PC-9 (cell line): ENCODE measurements at regions of chr7 and their contacts with region 1.

Region 1: GRCh38 chr7:73638911-73639310 is 14.6 kb upstream of the MLXIPL start:
- DNase-seq: no peak
- H3K4me3 ChIP-seq: no peak overlapping the region
- H3K27ac ChIP-seq: no peak overlapping the region
- H3K4me1 ChIP-seq: peaks cover 12% of the 10 kb centered on the region
- H3K27me3 ChIP-seq: no peaks in the 10 kb centered on the region
- CTCF ChIP-seq: no peak

Region 2: GRCh38 chr7:73329861-73330581 is 308.9 kb before region 1 on chr7:
- CTCF ChIA-PET with region 1: no interaction called
- POLR2A ChIA-PET with region 1: no interaction called
- intact Hi-C with region 1: no loop called
- DNase-seq: no peak
- H3K4me3 ChIP-seq: no peak overlapping the region
- H3K27ac ChIP-seq: no peak overlapping the region
- H3K4me1 ChIP-seq: no peaks in the 10 kb centered on the region
- H3K27me3 ChIP-seq: no peaks in the 10 kb centered on the region
- CTCF ChIP-seq: no peak

Region 3: GRCh38 chr7:73451780-73452398 is 187.0 kb before region 1 on chr7:
- CTCF ChIA-PET with region 1: no interaction called
- POLR2A ChIA-PET with region 1: no interaction called
- intact Hi-C with region 1: no loop called
- DNase-seq: no peak
- H3K4me3 ChIP-seq: no peak overlapping the region
- H3K27ac ChIP-seq: no peak overlapping the region
- H3K4me1 ChIP-seq: no peaks in the 10 kb centered on the region
- H3K27me3 ChIP-seq: no peaks in the 10 kb centered on the region
- CTCF ChIP-seq: peak; percentile 98

Region 4: DNA sequence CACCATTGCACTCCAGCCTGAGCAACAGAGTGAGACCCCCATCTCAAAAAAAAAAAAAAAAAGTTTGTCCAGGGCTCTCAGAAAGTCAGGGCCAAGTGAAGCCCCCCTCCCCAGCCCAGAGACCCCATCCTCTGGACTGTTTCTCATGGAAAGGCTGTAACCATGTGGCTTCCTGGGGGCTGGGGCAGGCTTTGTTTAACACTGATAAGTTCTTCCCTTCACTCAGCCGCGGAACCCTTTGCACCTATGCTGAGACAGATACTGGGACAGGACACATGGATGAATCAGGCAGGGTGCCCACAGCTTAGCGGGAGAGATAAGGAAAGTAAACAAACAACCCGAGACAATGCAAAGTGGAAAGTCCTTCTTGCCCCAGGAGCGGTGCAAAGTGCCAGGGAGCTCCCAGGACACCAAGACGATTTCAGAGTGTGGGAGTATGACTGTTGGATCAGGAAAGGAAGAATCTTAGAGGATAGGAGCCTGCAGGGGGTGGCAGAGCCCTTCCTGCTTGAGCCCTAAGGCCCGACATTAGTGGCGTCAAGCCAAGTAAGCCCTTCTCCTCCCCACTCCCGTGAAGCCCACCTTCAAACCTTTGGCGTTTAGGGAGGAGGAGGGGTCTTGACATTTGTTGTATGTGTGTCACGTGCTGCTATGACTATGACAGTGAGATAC is 26.2 kb before region 1 on chr7:
- CTCF ChIA-PET with region 1: interaction called, 16 read pairs
- POLR2A ChIA-PET with region 1: no interaction called
- intact Hi-C with region 1: no loop called
- DNase-seq: peak; percentile 77 to 80
- H3K4me3 ChIP-seq: no peak overlapping the region
- H3K27ac ChIP-seq: no peak overlapping the region
- H3K4me1 ChIP-seq: peaks cover 21% of the 10 kb centered on the region
- H3K27me3 ChIP-seq: no peaks in the 10 kb centered on the region
- CTCF ChIP-seq: peak; percentile 40; the same call in 1 of the 2 replicates

Region 5: DNA sequence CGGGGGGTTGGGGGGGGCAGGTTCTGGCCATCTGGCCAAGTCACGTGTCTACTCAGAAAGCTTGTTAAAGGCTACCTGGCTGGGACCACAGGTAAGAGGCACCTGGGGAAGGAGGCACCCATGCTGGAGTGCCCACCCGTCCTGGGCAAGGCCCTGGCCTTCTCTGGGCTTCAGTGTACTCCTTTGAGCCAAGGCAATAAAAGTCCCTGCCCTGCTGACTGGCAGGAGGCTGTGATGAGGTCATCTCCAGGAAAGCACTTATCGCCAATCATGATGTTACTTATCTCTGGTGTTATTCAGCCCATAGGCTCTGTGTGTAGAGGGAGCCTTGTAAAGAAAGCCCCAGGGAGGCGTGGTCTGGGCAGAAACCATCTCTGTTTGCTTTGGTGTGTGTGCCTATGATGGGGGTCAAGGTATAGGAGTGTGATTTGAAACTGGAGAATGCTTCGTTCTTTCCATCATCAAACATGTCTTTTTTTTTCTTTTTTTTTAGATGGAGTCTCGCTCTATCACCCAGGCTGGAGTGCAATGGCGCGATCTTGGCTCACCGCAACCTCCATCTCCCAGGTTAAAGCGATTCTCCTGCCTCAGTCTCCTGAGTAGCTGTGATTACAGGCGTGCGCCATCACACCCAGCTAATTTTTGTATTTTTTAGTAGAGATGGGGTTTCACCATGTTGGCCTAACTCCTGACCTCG is 189.3 kb after region 1 on chr7:
- CTCF ChIA-PET with region 1: no interaction called
- POLR2A ChIA-PET with region 1: no interaction called
- intact Hi-C with region 1: no loop called
- DNase-seq: peak; percentile 92 to 99
- H3K4me3 ChIP-seq: peak overlapping the region; percentile 58; the same call in 1 of the 2 replicates
- H3K27ac ChIP-seq: peak overlapping the region; percentile 99
- H3K4me1 ChIP-seq: peaks cover 69% of the 10 kb centered on the region
- H3K27me3 ChIP-seq: no peaks in the 10 kb centered on the region
- CTCF ChIP-seq: no peak